Activated CD8-positive, alpha-beta T cell treated with anti-CD3 and anti-CD28 coated beads, Interleukin-2, amount 10 ng/mL, durations not matched to agents 7 days and 5 days (primary cell): ENCODE measurements at regions of chr18 and their contacts with region 1.

Region 1: GRCh38 chr18:12327510-12328178 is 19.6 kb downstream of the TUBB6 start:
- DNase-seq: peak; percentile 83
- ATAC-seq: peak; percentile 88
- H3K4me3 Mint-ChIP-seq: no peak overlapping the region
- H3K27ac Mint-ChIP-seq: peak overlapping the region; percentile 55
- H3K4me1 Mint-ChIP-seq: peaks cover 17% of the 10 kb centered on the region
- H3K27me3 Mint-ChIP-seq: no peaks in the 10 kb centered on the region

Region 2: DNA sequence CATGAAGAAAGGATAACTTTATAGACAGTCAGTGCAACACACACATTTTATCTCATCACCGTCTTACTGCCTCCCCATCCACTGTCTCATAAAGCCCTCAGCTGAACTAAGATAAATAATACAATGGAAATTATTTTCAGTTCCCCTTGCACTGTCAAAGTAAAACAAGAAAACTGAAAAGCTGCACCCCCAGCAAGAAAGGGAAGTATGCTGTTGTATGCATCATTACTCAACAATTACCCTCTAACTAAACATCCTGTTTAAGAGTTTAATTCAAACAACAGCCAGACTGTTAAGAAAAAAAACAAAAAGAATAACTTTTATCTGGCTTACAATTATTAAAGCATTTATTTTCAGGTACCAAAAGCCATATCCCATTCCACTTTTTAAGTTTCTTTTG is 444.5 kb before region 1 on chr18:
- CTCF ChIA-PET with region 1: no interaction called
- POLR2A ChIA-PET with region 1: no interaction called
- DNase-seq: no peak
- ATAC-seq: no peak
- H3K4me3 Mint-ChIP-seq: no peak overlapping the region
- H3K27ac Mint-ChIP-seq: no peak overlapping the region
- H3K4me1 Mint-ChIP-seq: no peaks in the 10 kb centered on the region
- H3K27me3 Mint-ChIP-seq: no peaks in the 10 kb centered on the region

Region 3: DNA sequence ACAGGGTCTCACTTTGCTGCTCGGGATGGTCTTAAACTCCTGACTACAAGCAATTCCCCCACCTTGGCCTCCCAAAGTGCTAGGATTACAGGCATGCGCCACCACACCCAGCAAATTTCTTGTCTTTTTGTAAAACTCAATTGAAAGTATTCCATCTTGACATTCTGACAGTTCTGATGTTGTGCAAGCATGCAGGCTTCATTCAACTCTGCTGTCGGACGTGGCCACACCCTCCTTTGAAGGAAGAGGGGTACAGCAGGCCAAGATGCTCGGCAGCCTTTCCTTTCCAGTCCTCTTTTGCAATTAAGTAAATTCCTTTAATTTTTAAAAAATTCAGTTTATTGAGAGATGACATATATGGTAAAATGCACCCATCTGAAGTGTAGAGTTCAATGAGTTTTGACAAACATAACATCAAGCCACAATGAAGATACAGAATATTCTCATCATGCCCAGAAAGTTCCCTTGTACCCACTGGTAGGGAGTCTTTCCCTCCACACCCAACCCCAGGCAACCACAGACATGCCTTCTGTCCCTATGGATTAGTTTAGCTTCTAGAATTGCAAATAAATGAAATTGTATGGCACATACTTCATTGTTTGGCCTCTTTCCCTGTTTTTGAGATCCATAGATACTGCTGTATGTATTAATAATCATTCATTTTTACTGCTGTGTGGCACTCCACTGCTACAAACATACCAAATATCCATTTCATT is 13.5 kb after region 1 on chr18:
- CTCF ChIA-PET with region 1: interaction called, 18 read pairs
- POLR2A ChIA-PET with region 1: no interaction called
- DNase-seq: no peak
- ATAC-seq: no peak
- H3K4me3 Mint-ChIP-seq: no peak overlapping the region
- H3K27ac Mint-ChIP-seq: no peak overlapping the region
- H3K4me1 Mint-ChIP-seq: no peaks in the 10 kb centered on the region
- H3K27me3 Mint-ChIP-seq: no peaks in the 10 kb centered on the region

Region 4: DNA sequence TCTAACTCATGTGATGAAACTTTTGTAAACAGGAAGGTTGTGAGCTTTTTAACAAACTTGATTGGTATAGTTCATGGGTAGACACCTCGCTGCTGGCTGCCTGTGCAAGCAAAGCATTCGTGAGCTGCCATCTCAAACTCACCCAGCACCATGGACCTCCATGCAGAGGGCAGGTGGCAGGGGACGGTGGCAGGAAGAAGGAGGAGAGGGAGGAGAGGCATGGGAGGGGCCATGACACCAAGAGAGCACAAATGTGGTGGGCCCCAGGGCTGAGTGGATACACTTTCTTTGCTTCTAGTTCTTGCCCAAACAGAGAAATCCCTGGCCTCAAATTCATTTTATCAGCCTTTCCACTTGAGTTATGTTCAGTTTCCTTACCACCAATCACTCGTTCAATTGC is 20.3 kb after region 1 on chr18:
- CTCF ChIA-PET with region 1: interaction called, 12 read pairs
- POLR2A ChIA-PET with region 1: interaction called, 3 read pairs
- DNase-seq: no peak
- ATAC-seq: no peak
- H3K4me3 Mint-ChIP-seq: no peak overlapping the region
- H3K27ac Mint-ChIP-seq: no peak overlapping the region
- H3K4me1 Mint-ChIP-seq: no peaks in the 10 kb centered on the region
- H3K27me3 Mint-ChIP-seq: no peaks in the 10 kb centered on the region

Region 5: DNA sequence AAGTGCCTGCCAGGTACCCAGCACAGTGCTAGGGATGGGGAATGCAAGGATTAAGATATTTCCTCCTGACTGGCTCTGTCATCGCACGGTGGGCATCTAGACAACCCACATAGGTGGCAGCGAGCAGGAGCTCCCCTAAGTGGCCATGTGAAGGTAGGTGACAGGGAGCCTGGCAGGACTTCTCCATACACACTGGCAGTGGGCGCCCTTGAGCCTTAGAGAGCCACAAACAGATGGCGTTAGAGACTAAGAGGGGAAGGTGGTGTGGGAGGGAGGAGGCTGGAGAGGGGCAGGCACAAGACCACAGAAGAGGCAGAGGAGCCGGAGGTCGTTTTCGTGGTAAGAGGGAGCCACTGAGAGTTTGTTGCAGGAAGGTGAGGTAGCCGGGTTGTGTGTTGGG is 95.3 kb after region 1 on chr18:
- CTCF ChIA-PET with region 1: no interaction called
- POLR2A ChIA-PET with region 1: no interaction called
- DNase-seq: peak; percentile 31
- ATAC-seq: no peak
- H3K4me3 Mint-ChIP-seq: no peak overlapping the region
- H3K27ac Mint-ChIP-seq: no peak overlapping the region
- H3K4me1 Mint-ChIP-seq: peaks cover 18% of the 10 kb centered on the region
- H3K27me3 Mint-ChIP-seq: no peaks in the 10 kb centered on the region

Region 6: GRCh38 chr18:12520442-12520992 is 192.9 kb after region 1 on chr18:
- CTCF ChIA-PET with region 1: no interaction called
- POLR2A ChIA-PET with region 1: no interaction called
- DNase-seq: no peak
- ATAC-seq: no peak
- H3K4me3 Mint-ChIP-seq: no peak overlapping the region
- H3K27ac Mint-ChIP-seq: no peak overlapping the region
- H3K4me1 Mint-ChIP-seq: no peaks in the 10 kb centered on the region
- H3K27me3 Mint-ChIP-seq: peaks cover 18% of the 10 kb centered on the region